CD14-positive monocyte (primary cell): ENCODE measurements at regions of chr10 and their contacts with region 1.

Region 1: GRCh38 chr10:69506834-69507721 is 55.8 kb downstream of the TSPAN15 start:
- DNase-seq: no peak
- H3K4me3 ChIP-seq: peak overlapping the region in 1 of 3 experiments; percentile 59
- H3K4me3 Mint-ChIP-seq: peak overlapping the region; percentile 60 to 81
- H3K27ac ChIP-seq: no peak overlapping the region
- H3K27ac Mint-ChIP-seq: no peak overlapping the region
- H3K4me1 ChIP-seq: peaks cover 0 to 4% of the 10 kb centered on the region in 2 donors
- H3K4me1 Mint-ChIP-seq: peaks cover 6% of the 10 kb centered on the region
- H3K27me3 ChIP-seq: peaks cover 0 to 5% of the 10 kb centered on the region in 2 donors
- H3K27me3 Mint-ChIP-seq: peaks cover 7 to 25% (median 18%) of the 10 kb centered on the region in 3 donors
- CTCF ChIP-seq: no peak

Region 2: DNA sequence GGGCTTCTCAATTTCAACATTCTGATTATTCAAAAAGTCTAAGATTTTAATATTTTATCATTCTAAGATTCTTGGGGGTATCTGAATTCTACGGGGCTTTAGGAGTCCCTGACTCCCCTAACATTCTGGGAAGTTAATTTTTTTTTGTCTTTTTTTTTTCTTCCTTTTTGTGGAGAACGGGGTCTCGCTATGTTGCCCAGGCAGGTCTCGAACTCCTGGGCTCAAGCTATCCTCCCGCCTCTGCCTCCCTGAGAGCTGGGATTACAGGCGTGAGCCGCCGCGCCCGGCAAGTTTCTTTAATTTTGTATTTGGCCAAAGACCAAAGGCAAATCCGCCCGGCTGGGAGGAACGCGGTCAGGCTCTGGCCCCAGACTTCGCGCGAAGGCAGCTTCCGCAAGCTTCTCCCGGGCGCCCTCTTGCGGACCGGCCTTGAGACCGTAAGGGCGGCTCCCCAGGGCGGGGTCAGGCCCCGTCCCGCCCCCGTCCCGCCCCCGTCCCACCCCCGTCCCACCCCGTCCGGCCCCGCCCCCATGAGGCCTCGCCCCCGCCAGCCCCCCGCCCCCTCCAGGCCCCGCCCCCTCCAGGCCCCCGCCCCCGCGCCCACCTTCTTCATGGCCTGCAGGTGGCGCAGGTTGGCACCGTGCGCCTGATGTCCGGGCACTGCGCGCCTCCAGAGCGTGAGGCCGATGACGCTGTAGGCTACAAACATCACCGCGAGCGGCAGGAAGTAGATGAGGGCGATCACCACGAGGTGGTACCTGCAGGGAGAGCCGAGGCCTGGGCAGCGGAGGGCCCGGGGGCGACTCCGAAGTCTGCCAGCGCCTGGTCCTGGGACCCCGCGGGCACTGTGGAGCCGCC is 98.5 kb before region 1 on chr10:
- intact Hi-C with region 1: loop called (anchors 5 kb)
- DNase-seq: peak; percentile 86 to 95 (median 91)
- H3K4me3 ChIP-seq: peak overlapping the region; percentile 31 to 69 (median 32)
- H3K4me3 Mint-ChIP-seq: peak overlapping the region; percentile 76 to 87
- H3K27ac ChIP-seq: peak overlapping the region; percentile 61 to 68
- H3K27ac Mint-ChIP-seq: peak overlapping the region; percentile 56 to 88 (median 81)
- H3K4me1 ChIP-seq: peaks cover 20% of the 10 kb centered on the region in 2 donors
- H3K4me1 Mint-ChIP-seq: peaks cover 22% of the 10 kb centered on the region
- H3K27me3 ChIP-seq: no peaks in the 10 kb centered on the region
- H3K27me3 Mint-ChIP-seq: peaks cover 0 to 8% (median 4%) of the 10 kb centered on the region in 3 donors
- CTCF ChIP-seq: peak; percentile 91

Region 3: GRCh38 chr10:69418052-69418752 is 88.9 kb before region 1 on chr10:
- intact Hi-C with region 1: loop called in 1 of 2 experiments (anchors 5 kb)
- DNase-seq: no peak
- H3K4me3 ChIP-seq: no peak overlapping the region
- H3K4me3 Mint-ChIP-seq: no peak overlapping the region
- H3K27ac ChIP-seq: no peak overlapping the region
- H3K27ac Mint-ChIP-seq: no peak overlapping the region
- H3K4me1 ChIP-seq: peaks cover 0 to 4% of the 10 kb centered on the region in 2 donors
- H3K4me1 Mint-ChIP-seq: peaks cover 7% of the 10 kb centered on the region
- H3K27me3 ChIP-seq: no peaks in the 10 kb centered on the region
- H3K27me3 Mint-ChIP-seq: peaks cover 2 to 10% (median 6%) of the 10 kb centered on the region in 3 donors
- CTCF ChIP-seq: no peak

Region 4: GRCh38 chr10:69425511-69426298 is 81.4 kb before region 1 on chr10:
- intact Hi-C with region 1: loop called (anchors 5 kb)
- DNase-seq: peak in 1 of 3 donors; percentile 31
- H3K4me3 ChIP-seq: no peak overlapping the region
- H3K4me3 Mint-ChIP-seq: no peak overlapping the region
- H3K27ac ChIP-seq: no peak overlapping the region
- H3K27ac Mint-ChIP-seq: no peak overlapping the region
- H3K4me1 ChIP-seq: peaks cover 6 to 10% of the 10 kb centered on the region in 2 donors
- H3K4me1 Mint-ChIP-seq: peaks cover 17% of the 10 kb centered on the region
- H3K27me3 ChIP-seq: no peaks in the 10 kb centered on the region
- H3K27me3 Mint-ChIP-seq: peaks cover 3 to 11% (median 5%) of the 10 kb centered on the region in 3 donors
- CTCF ChIP-seq: no peak

Region 5: DNA sequence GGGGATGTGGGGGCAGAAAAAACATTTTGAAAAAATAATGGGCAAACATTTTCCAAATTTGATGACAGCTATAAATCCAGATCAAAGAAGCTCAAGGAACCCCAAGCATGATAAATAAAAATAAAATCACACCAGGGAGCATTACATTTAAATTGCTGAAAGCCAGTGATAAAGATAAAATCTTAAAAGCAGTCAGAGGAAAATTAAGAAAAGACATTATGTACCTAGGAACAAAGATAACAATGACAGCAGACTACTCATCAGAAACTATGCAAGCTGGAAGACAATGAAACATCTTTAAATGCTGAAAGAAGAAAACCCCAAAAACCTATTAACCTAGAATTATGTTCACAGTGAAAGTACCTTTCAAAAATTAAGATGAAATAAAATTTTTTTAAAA is 42.9 kb after region 1 on chr10:
- intact Hi-C with region 1: no loop called
- DNase-seq: no peak
- H3K4me3 ChIP-seq: no peak overlapping the region
- H3K4me3 Mint-ChIP-seq: no peak overlapping the region
- H3K27ac ChIP-seq: no peak overlapping the region
- H3K27ac Mint-ChIP-seq: no peak overlapping the region
- H3K4me1 ChIP-seq: no peaks in the 10 kb centered on the region
- H3K4me1 Mint-ChIP-seq: no peaks in the 10 kb centered on the region
- H3K27me3 ChIP-seq: no peaks in the 10 kb centered on the region
- H3K27me3 Mint-ChIP-seq: peaks cover 9 to 14% (median 11%) of the 10 kb centered on the region in 3 donors
- CTCF ChIP-seq: no peak